ENCODE measurements at regions of chr17 and their contacts with region 1.

Region 1: DNA sequence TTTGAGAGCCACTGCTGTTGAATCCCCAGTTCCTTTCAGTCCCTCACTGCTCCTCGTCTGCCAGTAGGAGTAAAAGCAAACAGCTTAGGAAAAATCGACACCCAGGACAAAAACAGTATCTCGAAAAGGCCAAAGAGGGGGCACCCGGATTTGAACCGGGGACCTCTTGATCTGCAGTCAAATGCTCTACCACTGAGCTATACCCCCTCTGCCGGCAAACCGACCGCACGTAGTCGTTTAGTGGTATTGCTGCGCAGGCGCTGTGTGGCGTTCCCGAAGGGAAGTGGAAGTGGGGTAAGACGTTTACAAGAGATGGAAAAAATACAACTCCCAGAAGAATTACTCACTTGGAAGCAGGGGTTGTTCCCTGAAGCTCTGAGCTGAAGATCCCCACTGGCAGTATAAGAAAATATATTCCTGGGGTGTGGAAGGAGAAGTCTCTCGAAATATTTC is 2.2 kb upstream of the PLXDC1 start:
- DNase-seq: peak; percentile 94
- H3K4me3 Mint-ChIP-seq: peak overlapping the region; percentile 90
- H3K27ac Mint-ChIP-seq: peak overlapping the region; percentile 94
- H3K4me1 Mint-ChIP-seq: peaks cover 38% of the 10 kb centered on the region
- H3K27me3 Mint-ChIP-seq: peaks cover 83% of the 10 kb centered on the region

Region 2: DNA sequence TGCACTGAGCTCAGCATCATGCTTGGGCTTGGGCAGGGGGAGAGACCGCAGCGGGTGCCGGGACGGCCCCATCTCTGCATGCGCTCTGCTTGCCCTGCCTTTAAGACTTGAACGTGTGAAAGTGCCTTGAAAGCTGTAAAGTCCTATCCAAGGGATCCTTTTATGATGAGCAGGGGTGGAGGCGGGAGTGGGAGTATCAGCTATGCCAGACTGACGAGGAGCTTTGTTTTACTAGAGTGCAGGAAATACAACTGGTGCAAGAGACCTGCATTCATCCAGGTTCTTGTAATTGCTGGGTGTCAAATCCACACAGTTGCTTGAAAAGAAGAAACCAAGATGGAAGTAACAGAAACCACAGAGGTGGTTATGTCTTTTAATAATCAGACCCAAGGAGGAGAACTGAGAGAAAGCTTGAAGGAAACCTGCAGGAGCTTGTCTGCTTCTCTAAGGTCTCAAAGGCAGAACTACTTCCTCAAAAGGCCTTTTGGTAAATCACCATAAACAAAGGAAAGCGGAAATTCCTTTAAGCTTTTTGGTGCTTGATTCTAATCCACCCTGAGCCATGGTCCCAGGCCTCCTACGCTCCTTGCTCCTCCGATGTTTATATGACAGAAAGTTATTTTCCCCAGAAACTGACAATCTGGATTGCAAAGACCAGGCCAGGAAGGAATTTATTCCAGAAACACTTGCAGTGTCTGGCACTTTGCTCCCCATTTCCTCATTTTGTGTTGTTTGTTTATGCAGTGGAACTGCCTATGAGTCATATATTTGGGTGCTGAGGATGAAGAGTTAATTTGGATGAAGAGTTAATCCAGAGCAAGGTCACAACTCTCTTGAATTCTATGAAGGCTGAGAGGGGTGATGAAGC is 135.1 kb before region 1 on chr17:
- CTCF ChIA-PET with region 1: interaction called, 19 read pairs
- DNase-seq: no peak
- H3K4me3 Mint-ChIP-seq: no peak overlapping the region
- H3K27ac Mint-ChIP-seq: peak overlapping the region; percentile 77
- H3K4me1 Mint-ChIP-seq: peaks cover 35% of the 10 kb centered on the region
- H3K27me3 Mint-ChIP-seq: no peaks in the 10 kb centered on the region

Region 3: DNA sequence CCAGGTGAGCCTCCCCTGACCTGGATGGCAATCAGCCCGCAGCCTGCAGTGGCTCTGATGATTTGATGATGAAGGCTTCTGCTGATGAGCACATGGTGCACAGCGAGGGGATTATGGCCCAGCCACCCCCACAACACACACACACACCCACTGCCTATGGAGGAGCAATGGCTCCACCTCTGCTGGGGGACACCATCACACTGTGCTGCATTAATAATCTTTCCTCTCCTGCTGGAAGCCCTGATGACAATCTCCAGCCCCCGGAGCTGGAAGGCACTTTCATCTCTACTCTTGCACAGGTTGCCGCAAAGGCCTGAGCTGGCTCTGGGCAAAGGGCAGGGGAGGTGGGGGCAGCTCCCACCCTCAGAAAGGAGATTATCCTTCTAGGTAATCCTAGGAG is 82.1 kb before region 1 on chr17:
- CTCF ChIA-PET with region 1: interaction called, 27 read pairs
- DNase-seq: no peak
- H3K4me3 Mint-ChIP-seq: no peak overlapping the region
- H3K27ac Mint-ChIP-seq: no peak overlapping the region
- H3K4me1 Mint-ChIP-seq: peaks cover 27% of the 10 kb centered on the region
- H3K27me3 Mint-ChIP-seq: peaks cover 15% of the 10 kb centered on the region

Region 4: GRCh38 chr17:39164675-39165143 is 11.1 kb after region 1 on chr17:
- CTCF ChIA-PET with region 1: interaction called, 57 read pairs
- DNase-seq: peak; percentile 85
- H3K4me3 Mint-ChIP-seq: peak overlapping the region; percentile 79
- H3K27ac Mint-ChIP-seq: no peak overlapping the region
- H3K4me1 Mint-ChIP-seq: peaks cover 40% of the 10 kb centered on the region
- H3K27me3 Mint-ChIP-seq: peaks cover 83% of the 10 kb centered on the region

Region 5: DNA sequence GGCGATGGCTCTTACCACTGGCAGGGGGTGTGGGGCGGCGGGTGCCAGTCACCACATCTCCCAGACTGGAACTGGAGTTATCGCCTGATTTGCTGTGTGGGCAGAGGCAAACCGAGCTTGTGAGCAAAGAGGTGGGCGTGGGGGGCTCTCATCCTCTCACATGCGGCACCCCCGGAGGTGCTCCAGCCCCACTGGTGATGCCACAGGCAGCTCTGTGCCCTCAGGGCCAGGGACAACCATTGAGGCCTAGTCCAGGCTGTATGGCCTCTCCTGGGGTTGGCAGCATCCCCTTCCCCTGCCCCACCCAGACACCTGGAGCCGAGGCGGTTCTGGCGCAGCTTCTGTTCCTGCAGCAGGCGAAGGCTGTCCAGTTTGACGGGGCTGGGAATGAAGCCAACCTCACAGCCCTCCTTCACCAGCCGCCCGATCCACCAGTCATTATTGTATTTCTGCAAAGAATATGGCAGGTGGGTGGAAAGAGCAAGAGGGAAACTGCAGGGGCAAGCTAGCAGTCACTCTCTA is 32.9 kb after region 1 on chr17:
- CTCF ChIA-PET with region 1: no interaction called
- DNase-seq: no peak
- H3K4me3 Mint-ChIP-seq: no peak overlapping the region
- H3K27ac Mint-ChIP-seq: no peak overlapping the region
- H3K4me1 Mint-ChIP-seq: peaks cover 7% of the 10 kb centered on the region
- H3K27me3 Mint-ChIP-seq: no peaks in the 10 kb centered on the region